ENCODE measurements at regions of chr9 and their contacts with region 1.

Region 1: DNA sequence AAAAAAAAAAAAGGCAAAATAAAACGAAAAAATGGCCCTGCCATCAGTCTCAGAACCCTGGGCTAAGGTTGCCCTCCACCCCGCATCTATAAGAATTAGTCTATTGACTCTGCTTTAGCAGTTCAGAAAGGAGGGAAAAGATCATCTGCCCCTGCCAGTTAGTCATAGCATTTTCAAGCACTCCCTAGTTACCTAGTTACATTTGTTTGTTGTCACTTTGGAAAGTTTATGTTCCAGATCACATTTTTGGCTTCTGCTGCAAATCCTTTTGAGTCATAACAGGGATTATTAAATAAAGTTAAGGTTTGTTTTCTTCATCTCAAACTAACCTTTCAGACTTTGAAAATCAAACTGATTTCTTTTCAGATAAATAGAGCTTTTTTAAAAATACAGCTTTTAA is 52.1 kb downstream of the AQP7 start:
- DNase-seq: no peak
- ATAC-seq: peak; percentile 64 to 66
- H3K4me3 ChIP-seq: no peak overlapping the region
- H3K27ac ChIP-seq: peak overlapping the region; percentile 57
- H3K4me1 ChIP-seq: peaks cover 2% of the 10 kb centered on the region
- H3K27me3 ChIP-seq: no peaks in the 10 kb centered on the region

Region 2: DNA sequence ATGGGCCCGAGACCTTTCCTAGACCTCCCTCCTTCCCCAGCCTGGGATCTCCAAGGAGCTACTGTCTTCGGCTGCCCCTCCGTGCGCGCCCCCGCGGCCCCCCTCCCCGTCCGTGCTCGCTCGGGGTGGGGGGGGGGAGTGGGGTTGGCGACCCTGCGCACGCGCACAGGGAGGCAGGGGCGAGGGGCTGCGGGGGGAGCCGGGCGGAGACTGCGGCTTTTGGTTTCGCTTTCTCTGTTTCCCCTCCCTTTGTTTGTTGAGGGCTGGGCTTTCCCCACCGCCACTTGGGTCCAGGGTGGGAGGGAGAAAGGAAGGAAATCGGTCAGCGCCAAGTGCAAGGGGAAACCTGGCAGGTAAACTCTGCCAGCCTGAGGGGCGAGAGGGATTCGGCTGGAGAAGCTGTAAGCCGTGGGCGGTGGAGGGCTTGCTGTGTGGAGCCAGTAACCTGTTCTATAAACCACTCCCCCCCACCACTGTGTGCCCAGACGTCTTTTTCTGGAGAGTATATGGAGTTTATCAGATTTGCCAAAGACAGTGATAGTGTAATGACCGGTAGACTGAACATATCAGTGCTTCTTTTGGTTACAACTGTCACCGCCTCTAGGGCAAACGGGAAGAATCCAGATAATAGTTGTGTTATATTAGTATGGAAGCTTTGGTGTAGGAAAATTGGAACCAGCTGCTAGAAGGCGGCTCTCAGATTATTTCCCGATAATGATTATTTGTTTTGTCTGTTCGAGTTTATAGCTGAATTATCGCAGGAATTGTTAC is 324.6 kb before region 1 on chr9:
- intact Hi-C with region 1: no loop called
- DNase-seq: peak; percentile 57 to 87 (median 83)
- ATAC-seq: peak; percentile 65 to 67
- H3K4me3 ChIP-seq: peak overlapping the region; percentile 75
- H3K27ac ChIP-seq: peak overlapping the region; percentile 98
- H3K4me1 ChIP-seq: peaks cover 9% of the 10 kb centered on the region
- H3K27me3 ChIP-seq: no peaks in the 10 kb centered on the region

Region 3: GRCh38 chr9:33264473-33265177 is 85.7 kb before region 1 on chr9 and contains the starts of genes BAG1 and CHMP5:
- intact Hi-C with region 1: loop called in 1 of 4 experiments (anchors 10 kb)
- DNase-seq: peak; percentile 100
- ATAC-seq: peak; percentile 98 to 99
- H3K4me3 ChIP-seq: peak within 1 kb of the TSS; percentile 82
- H3K27ac ChIP-seq: peak within 1 kb of the TSS; percentile 68
- H3K4me1 ChIP-seq: peaks cover 12% of the 10 kb centered on the region
- H3K27me3 ChIP-seq: no peaks in the 10 kb centered on the region
- total RNA-seq, gene BAG1: 199 to 229 (median 206) TPM
- total RNA-seq, gene CHMP5: 46.7 to 56.1 (median 52.1) TPM